ENCODE measurements at regions of chr2 and their contacts with region 1.

Region 1: GRCh38 chr2:102350137-102350793 is 5.3 kb upstream of the IL18R1 start:
- DNase-seq: no peak
- ATAC-seq: no peak
- H3K4me3 ChIP-seq: no peak overlapping the region
- H3K27ac ChIP-seq: no peak overlapping the region
- H3K4me1 ChIP-seq: peaks cover 0 to 4% of the 10 kb centered on the region in 2 donors
- H3K27me3 ChIP-seq: no peaks in the 10 kb centered on the region
- CTCF ChIP-seq: no peak
- POLR2A ChIP-seq: no peak

Region 2: GRCh38 chr2:102258386-102259074 is 91.7 kb before region 1 on chr2:
- in situ Hi-C with region 1: loop called in 2 of 4 experiments (anchors 5 to 10 kb)
- intact Hi-C with region 1: loop called (anchors 2 kb)
- DNase-seq: peak in 1 of 2 donors; percentile 36
- ATAC-seq: peak; percentile 88 to 93
- H3K4me3 ChIP-seq: no peak overlapping the region
- H3K27ac ChIP-seq: peak overlapping the region; percentile 48 to 82 (median 74)
- H3K4me1 ChIP-seq: peaks cover 12 to 33% of the 10 kb centered on the region in 2 donors
- H3K27me3 ChIP-seq: no peaks in the 10 kb centered on the region
- CTCF ChIP-seq: no peak
- POLR2A ChIP-seq: no peak

Region 3: GRCh38 chr2:102361632-102362241 is 11.5 kb after region 1 on chr2:
- in situ Hi-C with region 1: no loop called
- intact Hi-C with region 1: no loop called
- DNase-seq: no peak
- ATAC-seq: no peak
- H3K4me3 ChIP-seq: no peak overlapping the region
- H3K27ac ChIP-seq: no peak overlapping the region
- H3K4me1 ChIP-seq: no peaks in the 10 kb centered on the region
- H3K27me3 ChIP-seq: no peaks in the 10 kb centered on the region
- CTCF ChIP-seq: no peak
- POLR2A ChIP-seq: no peak

Region 4: DNA sequence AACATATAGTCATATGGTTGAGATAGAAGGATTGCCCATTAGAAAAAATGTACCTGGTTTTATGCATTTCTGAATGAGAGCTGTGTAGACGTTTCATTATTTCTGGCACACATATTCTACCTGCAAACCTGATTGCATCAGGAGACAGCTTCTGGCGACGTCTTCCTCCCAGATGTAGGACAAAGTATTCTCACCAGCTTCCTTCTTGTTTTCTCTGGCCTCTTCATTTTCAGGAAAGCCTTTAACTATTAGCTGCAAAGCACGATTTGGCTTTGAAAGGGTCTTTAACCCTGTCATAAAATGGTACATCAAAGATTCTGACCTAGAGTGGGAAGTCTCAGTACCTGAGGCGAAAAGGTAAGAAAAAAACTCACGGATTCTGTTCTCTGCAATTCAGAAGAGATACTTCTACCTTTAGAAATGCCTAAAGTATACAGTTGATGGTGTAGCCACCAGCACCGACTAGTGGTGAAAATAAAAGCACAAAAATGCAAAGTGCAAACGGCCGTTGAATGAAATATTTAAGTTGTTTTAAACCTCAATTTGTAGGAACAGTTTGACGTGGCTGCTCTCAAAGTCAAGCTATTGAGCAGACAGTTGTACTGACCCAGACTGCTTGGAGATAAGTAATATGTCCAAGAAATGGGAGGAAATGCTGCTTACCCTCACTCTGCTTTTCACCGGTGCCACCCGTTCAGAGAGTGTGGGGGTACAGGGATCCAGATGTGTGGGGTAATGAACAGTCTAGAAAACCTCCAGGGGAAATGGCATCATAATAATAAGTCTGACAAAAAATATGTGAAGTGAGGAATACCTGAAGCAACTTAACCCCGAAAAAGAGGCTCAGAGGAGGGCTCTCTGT is 92.9 kb after region 1 on chr2:
- in situ Hi-C with region 1: no loop called
- intact Hi-C with region 1: no loop called
- DNase-seq: no peak
- ATAC-seq: no peak
- H3K4me3 ChIP-seq: no peak overlapping the region
- H3K27ac ChIP-seq: no peak overlapping the region
- H3K4me1 ChIP-seq: no peaks in the 10 kb centered on the region
- H3K27me3 ChIP-seq: no peaks in the 10 kb centered on the region
- CTCF ChIP-seq: peak in 4 of 5 experiments; percentile 7 to 60 (median 39)
- POLR2A ChIP-seq: no peak